ENCODE measurements at regions of chr20 and their contacts with region 1.

Region 1: GRCh38 chr20:3710703-3711483 is 1.5 kb downstream of the SIGLEC1 start:
- DNase-seq: peak; percentile 28
- ATAC-seq: peak; percentile 75
- H3K4me3 ChIP-seq: no peak overlapping the region
- H3K27ac ChIP-seq: no peak overlapping the region
- H3K4me1 ChIP-seq: no peaks in the 10 kb centered on the region
- H3K27me3 ChIP-seq: peaks cover 19% of the 10 kb centered on the region
- CTCF ChIP-seq: peak; percentile 92
- POLR2A ChIP-seq: no peak
- RAD21 ChIP-seq: peak; percentile 78

Region 2: DNA sequence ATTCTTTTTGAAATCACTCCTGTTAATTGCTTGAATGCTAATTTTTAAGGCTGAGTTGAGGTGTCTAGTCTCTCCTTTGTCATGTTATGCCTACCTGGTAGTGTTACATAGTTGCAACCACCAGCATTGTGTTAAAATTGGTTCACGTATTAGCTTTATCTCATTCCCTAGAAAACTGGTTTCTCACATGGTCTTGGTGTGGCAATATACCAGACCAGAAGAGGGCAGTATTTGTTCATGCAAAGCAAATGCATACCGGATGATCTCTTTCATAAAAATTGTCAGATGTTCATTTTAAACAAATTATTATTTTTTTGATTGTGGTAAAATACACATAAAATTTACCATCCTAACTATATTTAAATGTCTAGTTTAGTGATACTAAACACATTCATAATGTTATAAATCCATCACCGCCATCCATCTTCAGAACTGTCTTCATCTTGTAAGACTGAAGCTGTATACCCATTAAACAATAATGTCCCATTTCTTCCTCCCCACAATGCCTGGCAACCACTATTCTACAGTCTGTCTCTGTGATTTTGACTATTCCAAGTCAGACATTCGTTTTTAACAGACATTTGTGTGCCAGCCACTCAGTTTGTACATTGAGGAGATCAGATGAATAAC is 147.2 kb before region 1 on chr20:
- CTCF ChIA-PET with region 1: interaction called, 13 read pairs
- POLR2A ChIA-PET with region 1: no interaction called
- dilution Hi-C with region 1: no loop called
- in situ Hi-C with region 1: no loop called
- intact Hi-C with region 1: loop called (anchors 1 kb)
- DNase-seq: peak; percentile 69
- ATAC-seq: peak; percentile 89
- H3K4me3 ChIP-seq: no peak overlapping the region
- H3K27ac ChIP-seq: no peak overlapping the region
- H3K4me1 ChIP-seq: no peaks in the 10 kb centered on the region
- H3K27me3 ChIP-seq: no peaks in the 10 kb centered on the region
- CTCF ChIP-seq: peak; percentile 80
- POLR2A ChIP-seq: no peak
- RAD21 ChIP-seq: peak; percentile 78

Region 3: DNA sequence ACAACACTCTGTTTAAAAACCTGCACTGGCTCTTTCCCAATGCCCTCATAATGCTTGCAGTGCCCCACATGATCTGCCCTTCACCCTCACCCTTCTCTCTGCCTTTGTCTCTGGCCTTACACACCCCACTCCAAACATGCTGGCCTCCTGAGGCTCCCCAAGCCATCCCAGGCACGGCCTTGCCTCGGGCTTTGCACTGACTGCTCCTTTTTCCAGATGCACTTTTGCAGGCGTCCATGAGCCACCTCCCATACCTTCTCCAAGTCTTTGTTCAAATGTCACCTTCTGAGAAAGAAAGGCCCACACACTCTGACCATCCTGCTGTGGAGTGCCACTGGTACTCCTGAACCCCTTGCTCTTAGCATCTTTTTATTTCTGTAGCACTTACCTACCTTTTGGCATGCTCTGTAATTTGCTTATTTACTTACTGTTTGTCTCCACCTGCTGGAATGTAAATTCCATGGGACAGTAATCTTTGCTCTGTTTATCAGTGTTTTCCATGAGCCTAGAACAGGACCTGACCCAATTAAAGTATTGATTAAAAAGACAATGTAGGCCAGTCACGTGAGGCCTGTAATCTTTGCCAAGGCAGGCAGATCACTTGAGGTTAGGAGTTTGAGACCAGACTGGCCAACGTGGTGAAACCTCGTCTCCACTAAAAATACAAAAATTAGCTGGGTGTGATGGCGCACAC is 78.4 kb before region 1 on chr20:
- CTCF ChIA-PET with region 1: no interaction called
- POLR2A ChIA-PET with region 1: no interaction called
- dilution Hi-C with region 1: no loop called
- in situ Hi-C with region 1: no loop called
- intact Hi-C with region 1: no loop called
- DNase-seq: no peak
- ATAC-seq: no peak
- H3K4me3 ChIP-seq: no peak overlapping the region
- H3K27ac ChIP-seq: no peak overlapping the region
- H3K4me1 ChIP-seq: no peaks in the 10 kb centered on the region
- H3K27me3 ChIP-seq: no peaks in the 10 kb centered on the region
- CTCF ChIP-seq: no peak
- POLR2A ChIP-seq: no peak
- RAD21 ChIP-seq: no peak